ENCODE measurements at regions of chr1 and their contacts with region 1.

Region 1: GRCh38 chr1:209585672-209586071 is 2.2 kb downstream of the CAMK1G start:
- DNase-seq: no peak
- H3K4me3 ChIP-seq: no peak overlapping the region
- H3K27ac ChIP-seq: no peak overlapping the region
- H3K4me1 ChIP-seq: peaks cover 17% of the 10 kb centered on the region
- H3K27me3 ChIP-seq: no peaks in the 10 kb centered on the region
- CTCF ChIP-seq: peak in 1 of 2 donors; percentile 5

Region 2: DNA sequence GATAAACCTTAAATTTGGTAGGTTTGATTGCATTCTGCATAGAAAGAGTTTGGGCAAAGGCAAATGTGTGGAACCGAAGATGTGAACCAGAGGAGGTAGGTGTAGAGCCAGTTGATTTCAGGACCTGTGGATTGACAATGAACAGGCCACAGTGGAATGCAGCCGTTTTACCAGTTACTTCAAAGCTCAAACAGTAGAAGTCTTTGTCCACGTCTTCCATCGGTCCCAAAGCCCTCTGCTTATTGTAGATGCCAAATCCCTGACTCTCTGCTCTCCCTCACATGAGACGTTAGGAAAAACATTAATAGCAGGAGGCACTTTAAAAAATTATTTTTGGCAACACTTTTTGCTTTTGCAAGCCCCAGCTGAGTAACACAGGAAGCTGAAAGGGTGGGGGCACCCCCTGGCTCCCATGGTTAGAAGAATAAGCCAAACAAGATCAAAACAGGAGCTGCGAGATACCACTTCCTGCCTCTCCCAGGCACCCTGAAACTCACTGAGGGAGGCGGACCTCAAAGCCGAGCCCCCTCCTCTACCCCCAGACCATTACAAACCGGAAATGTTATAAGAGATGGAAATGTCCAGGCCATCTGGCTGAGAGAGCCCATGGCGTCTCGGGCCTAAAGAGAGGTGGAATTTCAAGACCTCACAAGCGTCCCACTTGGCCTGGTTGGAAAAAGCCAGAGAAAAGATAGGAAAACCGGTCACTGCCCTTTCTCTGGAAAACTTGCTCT is 183.7 kb after region 1 on chr1:
- CTCF ChIA-PET with region 1: no interaction called
- dilution Hi-C with region 1: loop called (anchors 10 kb)
- in situ Hi-C with region 1: no loop called
- intact Hi-C with region 1: no loop called
- DNase-seq: peak; percentile 89
- H3K4me3 ChIP-seq: no peak overlapping the region
- H3K27ac ChIP-seq: peak overlapping the region; percentile 87
- H3K4me1 ChIP-seq: peaks cover 32% of the 10 kb centered on the region
- H3K27me3 ChIP-seq: no peaks in the 10 kb centered on the region
- CTCF ChIP-seq: no peak

Measured in mammary epithelial cell (primary cell).